ENCODE measurements at regions of chr20 and their contacts with region 1.

Region 1: GRCh38 chr20:24097499-24098245 is 109.1 kb upstream of the GGTLC1 start:
- DNase-seq: no peak
- ATAC-seq: no peak
- H3K4me3 ChIP-seq: no peak overlapping the region
- H3K27ac ChIP-seq: no peak overlapping the region
- H3K4me1 ChIP-seq: no peaks in the 10 kb centered on the region
- H3K27me3 ChIP-seq: 0 out of 2 replicates have a peak, but pooled peaks cover 2% of the 10 kb centered on the region
- CTCF ChIP-seq: no peak

Region 2: GRCh38 chr20:23754731-23755130 is 342.9 kb before region 1 on chr20:
- CTCF ChIA-PET with region 1: no interaction called
- POLR2A ChIA-PET with region 1: interaction called, 10 read pairs
- in situ Hi-C with region 1: no loop called
- intact Hi-C with region 1: no loop called
- DNase-seq: no peak
- ATAC-seq: no peak
- H3K4me3 ChIP-seq: no peak overlapping the region
- H3K27ac ChIP-seq: no peak overlapping the region
- H3K4me1 ChIP-seq: no peaks in the 10 kb centered on the region
- H3K27me3 ChIP-seq: no peaks in the 10 kb centered on the region
- CTCF ChIP-seq: no peak

Region 3: GRCh38 chr20:24303381-24303780 is 205.7 kb after region 1 on chr20:
- CTCF ChIA-PET with region 1: interaction called, 11 read pairs
- POLR2A ChIA-PET with region 1: no interaction called
- in situ Hi-C with region 1: no loop called
- intact Hi-C with region 1: no loop called
- DNase-seq: no peak
- ATAC-seq: no peak
- H3K4me3 ChIP-seq: no peak overlapping the region
- H3K27ac ChIP-seq: no peak overlapping the region
- H3K4me1 ChIP-seq: no peaks in the 10 kb centered on the region
- H3K27me3 ChIP-seq: no peaks in the 10 kb centered on the region; the same call in 1 of the 2 replicates
- CTCF ChIP-seq: peak; percentile 17; the same call in 1 of the 2 replicates

Measured in Panc1 (cell line).